GM12878 (cell line): ENCODE measurements at regions of chr18 and their contacts with region 1.

Region 1: DNA sequence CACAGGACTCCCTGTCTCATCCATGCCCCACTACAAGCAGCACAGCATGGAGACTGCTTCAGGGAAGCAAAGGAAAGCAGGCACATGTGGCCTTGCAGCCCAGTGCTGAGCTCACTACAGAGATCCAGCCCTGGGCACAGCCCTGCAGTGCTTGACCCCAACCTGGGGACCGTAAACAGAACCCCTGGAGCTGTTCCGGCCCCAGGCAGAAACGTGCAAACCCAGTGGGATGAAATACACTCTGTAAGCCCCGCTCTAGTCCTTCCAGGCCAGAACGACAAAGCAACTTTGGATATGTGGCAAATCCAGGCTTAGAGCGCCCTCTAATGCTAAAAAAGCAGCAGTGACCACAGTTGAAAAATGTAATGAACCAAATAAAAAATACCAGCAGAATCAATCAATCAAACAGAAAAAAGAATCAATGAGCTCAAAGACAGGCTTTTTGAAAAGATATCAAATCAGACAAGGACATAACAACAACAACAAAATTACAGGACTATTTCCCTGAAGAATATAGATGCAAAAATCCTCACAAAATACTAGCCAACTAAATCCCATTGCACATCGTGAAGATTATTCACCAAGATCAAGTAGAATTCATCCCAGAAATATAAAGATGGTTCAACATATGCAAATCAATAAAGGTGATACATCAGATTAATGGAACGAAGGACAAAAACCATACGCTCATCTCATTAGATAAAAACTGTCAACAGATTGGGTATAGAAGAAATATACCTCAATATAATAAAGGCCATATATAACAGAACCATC is 45.6 kb downstream of the ZNF519 start:
- DNase-seq: no peak
- ATAC-seq: peak; percentile 74
- H3K4me3 ChIP-seq: no peak overlapping the region
- H3K27ac ChIP-seq: no peak overlapping the region
- H3K4me1 ChIP-seq: no peaks in the 10 kb centered on the region
- H3K27me3 ChIP-seq: no peaks in the 10 kb centered on the region
- CTCF ChIP-seq: peak; percentile 60 to 75 (median 72)
- EP300 ChIP-seq: no peak
- POLR2A ChIP-seq: no peak
- RAD21 ChIP-seq: peak; percentile 96

Region 2: DNA sequence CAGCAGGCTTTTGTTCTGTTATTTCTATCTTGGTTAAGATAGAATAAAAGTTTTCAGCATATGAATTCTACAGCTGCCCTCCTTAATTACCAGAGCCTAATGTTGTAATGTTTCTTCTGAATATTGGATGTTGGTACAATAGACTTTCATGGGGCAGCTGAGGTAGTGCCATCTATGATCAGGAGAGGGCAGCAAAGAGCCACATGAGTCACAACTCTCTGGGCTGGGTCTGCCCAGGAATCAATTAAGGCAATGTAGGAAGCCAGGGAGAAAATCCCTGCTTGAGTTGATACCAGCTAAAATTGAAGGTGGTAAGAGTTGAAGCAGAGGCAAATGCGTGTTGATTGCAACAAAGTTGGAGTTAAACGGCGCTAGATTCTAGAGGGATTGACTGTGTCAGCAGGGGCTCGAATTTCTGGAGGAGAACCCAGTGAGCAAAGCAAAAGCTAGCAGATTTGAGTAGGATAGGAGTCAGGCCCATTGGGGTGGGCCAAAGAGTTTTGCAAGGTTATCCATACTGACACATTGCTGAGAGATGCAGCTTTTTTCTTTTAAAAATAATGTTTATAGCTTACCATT is 273.3 kb before region 1 on chr18:
- CTCF ChIA-PET with region 1: interaction called, 50 read pairs
- POLR2A ChIA-PET with region 1: no interaction called
- RAD21 ChIA-PET with region 1: interaction called, 17 read pairs
- SMC1A ChIA-PET with region 1: interaction called, 18 read pairs
- in situ Hi-C with region 1: no loop called
- intact Hi-C with region 1: no loop called
- DNase-seq: no peak
- ATAC-seq: peak; percentile 98
- H3K4me3 ChIP-seq: no peak overlapping the region
- H3K27ac ChIP-seq: no peak overlapping the region
- H3K4me1 ChIP-seq: no peaks in the 10 kb centered on the region
- H3K27me3 ChIP-seq: peaks cover 2 to 3% of the 10 kb centered on the region in 2 experiments; a peak in 3 of 4 replicates
- CTCF ChIP-seq: peak; percentile 79 to 89 (median 80)
- EP300 ChIP-seq: no peak
- POLR2A ChIP-seq: no peak
- RAD21 ChIP-seq: peak; percentile 63

Region 3: GRCh38 chr18:13823707-13824395 is 262.8 kb before region 1 on chr18 and contains the start of gene MC5R:
- CTCF ChIA-PET with region 1: interaction called, 23 read pairs
- POLR2A ChIA-PET with region 1: no interaction called
- RAD21 ChIA-PET with region 1: interaction called, 14 read pairs
- SMC1A ChIA-PET with region 1: interaction called, 15 read pairs
- in situ Hi-C with region 1: no loop called
- intact Hi-C with region 1: loop called (anchors 1 kb)
- DNase-seq: no peak
- ATAC-seq: peak; percentile 98
- H3K4me3 ChIP-seq: no peak within 1 kb of the TSS; the same call in 1 of the 2 replicates
- H3K27ac ChIP-seq: no peak within 1 kb of the TSS
- H3K4me1 ChIP-seq: no peaks in the 10 kb centered on the region
- H3K27me3 ChIP-seq: no peaks in the 10 kb centered on the region
- CTCF ChIP-seq: peak; percentile 90 to 96 (median 94)
- EP300 ChIP-seq: no peak
- POLR2A ChIP-seq: no peak
- RAD21 ChIP-seq: peak; percentile 83
- polyA plus RNA-seq, gene MC5R: not detected

Region 4: DNA sequence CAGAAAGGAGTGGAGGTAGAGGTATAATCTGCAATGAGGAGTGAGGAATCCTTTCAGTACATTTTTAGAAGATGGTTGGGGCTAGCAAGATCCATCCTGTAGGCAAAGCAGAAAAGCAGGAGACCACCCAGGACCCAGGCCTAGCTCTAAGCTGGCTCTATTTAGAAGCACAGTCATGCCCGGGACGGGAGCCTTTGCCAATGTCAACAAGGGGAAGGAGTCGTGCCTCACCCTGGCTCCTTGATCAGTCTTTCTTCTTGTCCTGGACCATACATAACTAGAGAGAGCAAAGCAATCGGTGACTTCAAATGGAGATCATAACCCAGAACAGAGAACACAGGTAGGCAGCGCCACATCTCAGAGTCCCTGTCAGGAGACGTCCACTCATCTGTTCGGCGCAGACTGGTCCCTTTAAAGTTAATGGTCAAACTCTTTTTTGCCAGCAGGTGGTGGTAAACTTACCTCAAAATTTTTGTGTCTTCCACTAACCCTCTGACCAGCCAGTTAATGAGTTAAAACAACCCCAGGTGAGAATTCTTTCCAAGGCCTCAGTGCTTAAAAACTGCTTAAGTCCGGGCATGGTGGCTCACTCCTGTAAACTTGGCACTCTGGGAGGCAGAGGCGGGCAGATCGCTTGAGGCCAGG is 254.7 kb before region 1 on chr18:
- CTCF ChIA-PET with region 1: interaction called, 20 read pairs
- POLR2A ChIA-PET with region 1: no interaction called
- RAD21 ChIA-PET with region 1: interaction called, 8 read pairs
- SMC1A ChIA-PET with region 1: interaction called, 5 read pairs
- in situ Hi-C with region 1: loop called (anchors 5 kb)
- intact Hi-C with region 1: no loop called
- DNase-seq: no peak
- ATAC-seq: peak; percentile 48; the same call in 2 of the 3 replicates
- H3K4me3 ChIP-seq: no peak overlapping the region
- H3K27ac ChIP-seq: no peak overlapping the region
- H3K4me1 ChIP-seq: no peaks in the 10 kb centered on the region
- H3K27me3 ChIP-seq: no peaks in the 10 kb centered on the region
- CTCF ChIP-seq: peak in 1 of 3 experiments; percentile 20; a peak in 2 of 6 replicates
- EP300 ChIP-seq: no peak
- POLR2A ChIP-seq: no peak
- RAD21 ChIP-seq: peak; percentile 32

Region 5: GRCh38 chr18:13871701-13872100 is 214.9 kb before region 1 on chr18:
- CTCF ChIA-PET with region 1: no interaction called
- POLR2A ChIA-PET with region 1: no interaction called
- RAD21 ChIA-PET with region 1: no interaction called
- SMC1A ChIA-PET with region 1: no interaction called
- in situ Hi-C with region 1: loop called (anchors 10 kb)
- intact Hi-C with region 1: no loop called
- DNase-seq: no peak
- ATAC-seq: no peak
- H3K4me3 ChIP-seq: no peak overlapping the region
- H3K27ac ChIP-seq: no peak overlapping the region
- H3K4me1 ChIP-seq: no peaks in the 10 kb centered on the region
- H3K27me3 ChIP-seq: peaks cover 1 to 19% of the 10 kb centered on the region in 2 experiments; a peak in 3 of 4 replicates
- CTCF ChIP-seq: no peak
- EP300 ChIP-seq: no peak
- POLR2A ChIP-seq: no peak
- RAD21 ChIP-seq: no peak

Region 6: GRCh38 chr18:14098467-14098866 is 11.8 kb after region 1 on chr18:
- CTCF ChIA-PET with region 1: interaction called, 10 read pairs
- POLR2A ChIA-PET with region 1: no interaction called
- RAD21 ChIA-PET with region 1: no interaction called
- SMC1A ChIA-PET with region 1: interaction called, 4 read pairs
- in situ Hi-C with region 1: no loop called
- intact Hi-C with region 1: no loop called
- DNase-seq: no peak
- ATAC-seq: no peak
- H3K4me3 ChIP-seq: no peak overlapping the region
- H3K27ac ChIP-seq: no peak overlapping the region
- H3K4me1 ChIP-seq: no peaks in the 10 kb centered on the region
- H3K27me3 ChIP-seq: no peaks in the 10 kb centered on the region
- CTCF ChIP-seq: no peak
- EP300 ChIP-seq: no peak
- POLR2A ChIP-seq: no peak
- RAD21 ChIP-seq: no peak